ENCODE measurements at regions of chr10 and their contacts with region 1.

Region 1: GRCh38 chr10:30591249-30591670 is 38.3 kb downstream of the LYZL2 start:
- DNase-seq: no peak
- H3K4me3 ChIP-seq: no peak overlapping the region
- H3K27ac ChIP-seq: no peak overlapping the region
- H3K4me1 ChIP-seq: peaks cover 0 to 5% (median 1%) of the 10 kb centered on the region in 4 experiments; a peak in 4 of 7 replicates
- H3K27me3 ChIP-seq: peaks cover 7 to 34% (median 15%) of the 10 kb centered on the region in 4 experiments
- CTCF ChIP-seq: peak; percentile 20 to 73 (median 66)
- EP300 ChIP-seq: no peak
- POLR2A ChIP-seq: no peak
- RAD21 ChIP-seq: peak; percentile 79 to 87

Region 2: GRCh38 chr10:30392564-30392990 is 198.7 kb before region 1 on chr10:
- CTCF ChIA-PET with region 1: interaction called, 129 read pairs
- POLR2A ChIA-PET with region 1: no interaction called
- DNase-seq: peak; percentile 47 to 93
- H3K4me3 ChIP-seq: no peak overlapping the region
- H3K27ac ChIP-seq: no peak overlapping the region
- H3K4me1 ChIP-seq: peaks cover 0 to 2% (median 0%) of the 10 kb centered on the region in 4 experiments; a peak in 2 of 7 replicates
- H3K27me3 ChIP-seq: no peaks in the 10 kb centered on the region
- CTCF ChIP-seq: peak; percentile 93 to 98 (median 93)
- EP300 ChIP-seq: no peak
- POLR2A ChIP-seq: no peak
- RAD21 ChIP-seq: peak; percentile 97 to 98

Region 3: DNA sequence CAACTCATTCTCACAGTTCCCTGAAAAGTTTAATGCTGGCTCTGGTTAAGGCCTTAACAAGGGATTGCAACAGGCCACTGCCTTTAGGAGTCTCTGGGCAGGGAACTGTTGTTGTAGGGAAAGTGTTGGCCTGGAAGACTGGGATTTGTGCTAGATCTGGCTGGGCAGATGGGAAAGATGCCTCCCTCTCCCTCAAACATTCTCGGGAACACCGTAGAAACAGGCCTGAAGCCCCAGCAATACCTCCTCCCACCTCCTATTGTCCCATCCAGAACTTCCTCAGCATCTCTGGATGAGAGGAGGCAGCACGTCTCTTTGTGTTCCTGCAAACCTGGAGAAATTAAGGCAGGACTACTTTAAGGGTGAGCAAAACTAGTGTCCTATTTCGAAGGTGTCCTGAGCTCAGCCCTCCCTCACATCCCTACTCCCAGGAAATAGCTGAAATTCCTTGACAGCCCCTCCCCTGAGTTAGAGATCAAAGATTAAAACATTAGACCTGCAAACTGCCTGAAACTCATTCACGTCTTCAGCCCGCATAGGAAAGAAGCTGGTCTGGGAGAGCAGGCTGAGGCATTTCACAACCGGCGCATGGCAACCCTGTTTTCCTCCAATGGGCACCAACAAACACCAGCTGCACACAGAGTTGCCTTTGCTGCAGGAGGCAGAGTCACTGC is 168.1 kb before region 1 on chr10:
- CTCF ChIA-PET with region 1: interaction called, 17 read pairs
- POLR2A ChIA-PET with region 1: no interaction called
- DNase-seq: peak in 1 of 2 experiments; percentile 25
- H3K4me3 ChIP-seq: no peak overlapping the region
- H3K27ac ChIP-seq: no peak overlapping the region
- H3K4me1 ChIP-seq: peaks cover 2 to 12% (median 8%) of the 10 kb centered on the region in 4 experiments; a peak in 6 of 7 replicates
- H3K27me3 ChIP-seq: no peaks in the 10 kb centered on the region
- CTCF ChIP-seq: no peak
- EP300 ChIP-seq: no peak
- POLR2A ChIP-seq: peak in 1 of 2 experiments; percentile 55; a peak in 1 of 3 replicates
- RAD21 ChIP-seq: no peak

Region 4: GRCh38 chr10:30553625-30554439 is 37.4 kb before region 1 on chr10:
- CTCF ChIA-PET with region 1: interaction called, 12 read pairs
- POLR2A ChIA-PET with region 1: no interaction called
- DNase-seq: peak in 1 of 2 experiments; percentile 55
- H3K4me3 ChIP-seq: peak overlapping the region in 2 of 4 experiments; percentile 1 to 46; a peak in 4 of 8 replicates
- H3K27ac ChIP-seq: peak overlapping the region; percentile 89
- H3K4me1 ChIP-seq: peaks cover 0 to 15% (median 5%) of the 10 kb centered on the region in 4 experiments; a peak in 6 of 7 replicates
- H3K27me3 ChIP-seq: no peaks in the 10 kb centered on the region
- CTCF ChIP-seq: no peak
- EP300 ChIP-seq: no peak; a peak in 1 of 3 replicates
- POLR2A ChIP-seq: peak in 1 of 2 experiments; percentile 70; a peak in 2 of 3 replicates
- RAD21 ChIP-seq: no peak

Region 5: GRCh38 chr10:30606313-30606712 is 15.1 kb after region 1 on chr10:
- CTCF ChIA-PET with region 1: interaction called, 16 read pairs
- POLR2A ChIA-PET with region 1: interaction called, 4 read pairs
- DNase-seq: peak in 1 of 2 experiments; percentile 17
- H3K4me3 ChIP-seq: no peak overlapping the region
- H3K27ac ChIP-seq: no peak overlapping the region
- H3K4me1 ChIP-seq: no peaks in the 10 kb centered on the region
- H3K27me3 ChIP-seq: peaks cover 0 to 2% (median 0%) of the 10 kb centered on the region in 4 experiments; a peak in 1 of 7 replicates
- CTCF ChIP-seq: no peak
- EP300 ChIP-seq: no peak
- POLR2A ChIP-seq: no peak
- RAD21 ChIP-seq: no peak

Measured in H1 (cell line).